AG04449 (cell line): ENCODE measurements at regions of chr19 and their contacts with region 1.

Region 1: DNA sequence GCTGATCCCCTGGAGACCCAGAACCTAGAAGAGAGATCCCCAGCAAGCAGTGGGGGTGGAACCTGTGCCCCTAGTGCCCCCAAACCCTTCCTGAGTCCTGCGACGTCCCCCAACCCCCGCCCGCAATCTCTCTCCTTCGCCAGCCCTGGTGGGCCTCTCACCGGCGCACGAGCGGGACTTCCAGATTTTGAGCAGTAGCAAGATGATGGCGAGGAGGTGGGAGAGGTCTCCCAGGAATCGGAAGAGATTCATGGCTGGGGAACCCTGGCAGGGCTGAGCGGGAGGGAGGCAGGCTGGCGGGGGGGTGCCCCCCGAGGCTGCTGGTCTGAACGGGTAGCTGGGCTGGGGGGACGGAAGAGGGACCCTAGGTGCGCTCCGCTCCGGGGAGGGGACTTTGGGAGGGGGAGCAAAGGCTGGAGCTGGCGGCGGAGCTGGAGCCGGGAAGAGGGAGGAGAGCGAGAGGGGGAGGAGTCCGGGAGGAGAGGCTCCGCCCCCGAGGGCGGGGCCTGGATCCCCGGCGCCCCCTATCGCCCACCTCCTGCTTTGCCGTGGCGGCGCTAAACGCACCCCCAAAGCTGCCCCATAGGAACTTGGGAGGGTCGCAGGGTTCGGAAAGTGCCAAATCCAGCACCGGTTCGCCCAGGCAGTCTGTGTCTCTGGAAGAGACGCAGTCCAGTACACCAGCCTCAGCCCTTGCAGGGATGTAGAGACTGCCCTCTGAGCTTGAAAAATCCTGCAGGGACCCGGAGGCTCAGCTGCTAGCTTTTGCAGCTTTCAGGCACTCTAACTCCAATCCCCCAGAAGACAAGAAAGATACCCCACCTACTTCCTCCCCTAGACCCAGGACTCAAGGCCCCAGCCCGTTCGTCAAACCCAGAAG is at the start of gene KDELR1:
- DNase-seq: no peak
- H3K4me3 ChIP-seq: peak within 1 kb of the TSS; percentile 98
- CTCF ChIP-seq: peak; percentile 95

Region 2: DNA sequence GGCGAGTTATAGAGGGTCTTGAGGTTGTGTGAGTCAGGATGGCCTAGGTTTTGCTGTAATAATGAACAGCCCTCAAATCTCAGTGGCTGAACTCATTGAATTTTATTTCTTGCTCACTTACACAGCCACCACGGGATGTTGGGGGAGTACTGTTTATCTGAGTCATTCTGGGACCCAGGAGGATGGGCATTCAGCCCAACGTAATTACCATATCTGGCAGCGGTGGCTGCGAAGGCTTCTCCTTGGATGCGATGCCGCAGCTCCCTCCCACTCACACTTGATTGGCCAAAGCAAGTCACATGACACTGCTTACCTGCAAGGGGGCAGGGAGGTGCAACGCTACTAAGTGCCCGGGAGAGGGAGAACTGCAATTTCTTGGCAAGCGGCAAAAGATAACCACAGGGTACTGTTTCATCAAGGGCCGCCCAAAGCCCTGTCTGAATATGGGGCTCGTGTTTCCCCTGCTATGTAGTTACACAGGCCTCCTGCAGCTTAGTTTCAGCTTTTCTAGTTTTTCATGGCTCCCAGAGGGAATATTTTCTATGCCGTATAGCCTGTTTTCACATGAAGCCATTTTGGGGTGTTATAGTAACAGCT is 201.0 kb before region 1 on chr19:
- CTCF ChIA-PET with region 1: no interaction called
- POLR2A ChIA-PET with region 1: no interaction called
- DNase-seq: no peak
- H3K4me3 ChIP-seq: no peak overlapping the region
- CTCF ChIP-seq: no peak

Region 3: GRCh38 chr19:48321622-48322591 is 69.4 kb before region 1 on chr19:
- CTCF ChIA-PET with region 1: interaction called, 15 read pairs
- POLR2A ChIA-PET with region 1: interaction called, 3 read pairs
- DNase-seq: peak; percentile 86
- H3K4me3 ChIP-seq: peak overlapping the region; percentile 67
- CTCF ChIP-seq: no peak

Region 4: DNA sequence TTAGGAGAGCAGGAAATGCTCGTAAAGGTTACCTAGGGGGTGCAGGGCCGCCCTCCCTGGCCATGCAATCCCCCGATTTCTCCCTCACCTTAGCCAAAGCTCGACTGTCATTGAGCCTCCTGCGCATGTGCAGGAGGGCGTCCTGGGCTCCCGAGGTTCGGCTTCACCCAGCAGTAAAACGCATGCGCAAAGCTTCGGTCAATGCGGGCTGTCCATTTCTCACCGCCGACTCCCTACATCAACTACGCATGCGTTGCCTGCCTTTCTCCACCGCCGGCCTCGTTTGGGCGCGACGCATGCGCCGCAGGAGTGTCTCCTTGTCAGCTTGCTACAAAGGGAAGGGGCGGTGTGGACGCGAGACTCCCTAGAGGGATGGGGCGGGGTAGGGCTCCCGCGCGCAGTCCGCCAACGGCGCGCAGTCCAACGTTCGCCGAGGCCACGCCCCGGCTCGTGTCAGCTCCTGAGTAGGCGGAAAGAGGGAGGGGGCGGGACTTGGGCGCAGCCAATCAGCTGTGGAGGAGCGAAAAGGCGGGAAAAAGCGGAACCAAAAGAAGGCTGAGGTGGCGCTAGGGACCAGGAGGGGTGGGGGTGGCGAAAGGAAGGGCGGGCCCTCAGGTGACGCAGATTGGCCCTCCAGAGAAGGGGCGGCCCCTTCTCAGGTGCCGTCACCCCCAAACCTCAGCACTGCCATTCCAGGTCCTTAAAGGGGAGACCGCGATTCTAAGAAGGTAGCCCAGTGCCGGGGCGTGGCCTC is 27.4 kb before region 1 on chr19 and contains the starts of genes SYNGR4 and TMEM143:
- CTCF ChIA-PET with region 1: interaction called, 19 read pairs
- POLR2A ChIA-PET with region 1: interaction called, 15 read pairs
- DNase-seq: peak; percentile 96
- H3K4me3 ChIP-seq: peak within 1 kb of the TSS; percentile 81
- CTCF ChIP-seq: no peak

Region 5: GRCh38 chr19:48403606-48404005 is 12.3 kb after region 1 on chr19:
- CTCF ChIA-PET with region 1: interaction called, 40 read pairs
- POLR2A ChIA-PET with region 1: interaction called, 4 read pairs
- DNase-seq: no peak
- H3K4me3 ChIP-seq: no peak overlapping the region
- CTCF ChIP-seq: no peak

Region 6: GRCh38 chr19:48419158-48419920 is 28.0 kb after region 1 on chr19:
- CTCF ChIA-PET with region 1: interaction called, 11 read pairs
- POLR2A ChIA-PET with region 1: no interaction called
- DNase-seq: no peak
- H3K4me3 ChIP-seq: peak overlapping the region; percentile 6; the same call in 1 of the 2 replicates
- CTCF ChIP-seq: no peak